Activated B cell treated with CpG ODN at 0.5 μM for 24 hours (primary cell): ENCODE measurements at regions of chr2 and their contacts with region 1.

Region 1: DNA sequence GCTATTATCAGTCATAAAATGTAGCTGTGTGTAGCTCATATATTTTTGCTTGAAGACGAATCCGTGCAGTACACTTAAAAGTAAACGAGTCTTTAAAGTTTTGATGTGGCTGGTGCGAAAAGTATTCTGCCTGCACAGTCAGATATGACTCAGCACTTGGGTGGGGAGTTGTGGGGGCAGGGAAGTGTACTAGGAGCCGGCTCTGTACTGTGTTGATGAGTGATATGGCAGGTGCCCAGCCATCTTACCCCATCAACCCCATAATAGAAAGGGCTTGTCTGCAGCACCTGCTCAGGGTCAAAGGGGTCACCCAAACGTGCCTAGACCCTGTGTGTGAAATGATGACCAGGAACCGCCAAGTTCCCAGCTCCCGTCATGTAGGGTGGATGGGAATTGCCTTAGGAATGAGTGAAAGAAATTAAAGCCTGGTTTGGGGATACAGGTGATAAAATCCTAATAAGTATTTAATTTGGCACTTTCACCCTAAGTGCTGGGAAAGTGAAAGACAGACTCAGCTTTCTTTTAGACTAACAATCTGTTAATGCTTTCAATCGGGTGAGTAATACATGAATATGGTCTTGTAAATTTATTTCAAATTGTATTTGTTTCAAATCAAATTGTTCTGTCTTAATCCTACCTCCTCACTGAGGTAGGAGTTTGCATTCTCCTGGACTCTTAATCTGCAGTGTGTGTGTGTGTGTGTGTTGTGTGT is 48.0 kb downstream of the BCL2L11 start:
- DNase-seq: no peak
- ATAC-seq: peak; percentile 59
- H3K4me3 Mint-ChIP-seq: no peak overlapping the region
- H3K27ac Mint-ChIP-seq: no peak overlapping the region
- H3K4me1 Mint-ChIP-seq: peaks cover 25% of the 10 kb centered on the region
- H3K27me3 Mint-ChIP-seq: no peaks in the 10 kb centered on the region
- CTCF ChIP-seq: no peak

Region 2: GRCh38 chr2:111194835-111195621 is 26.3 kb after region 1 on chr2:
- CTCF ChIA-PET with region 1: no interaction called
- POLR2A ChIA-PET with region 1: interaction called, 10 read pairs
- intact Hi-C with region 1: no loop called
- DNase-seq: no peak
- ATAC-seq: peak; percentile 78
- H3K4me3 Mint-ChIP-seq: peak overlapping the region; percentile 6
- H3K27ac Mint-ChIP-seq: peak overlapping the region; percentile 37
- H3K4me1 Mint-ChIP-seq: peaks cover 43% of the 10 kb centered on the region
- H3K27me3 Mint-ChIP-seq: no peaks in the 10 kb centered on the region
- CTCF ChIP-seq: no peak